ENCODE measurements at regions of chr17 and their contacts with region 1.

Region 1: GRCh38 chr17:63549946-63550807 is at the start of gene DCAF7:
- DNase-seq: peak; percentile 99 to 100
- ATAC-seq: peak; percentile 99
- H3K4me3 ChIP-seq: peak within 1 kb of the TSS; percentile 58 to 99
- H3K27ac ChIP-seq: peak within 1 kb of the TSS in 1 of 2 donors; percentile 78
- H3K4me1 ChIP-seq: peaks cover 3 to 7% of the 10 kb centered on the region in 2 donors
- H3K27me3 ChIP-seq: no peaks in the 10 kb centered on the region
- total RNA-seq, gene DCAF7: 39.3 to 52.7 TPM

Region 2: GRCh38 chr17:63600569-63601438 is 50.6 kb after region 1 on chr17 and contains the start of gene TACO1:
- intact Hi-C with region 1: loop called in 1 of 2 experiments (anchors 5 kb)
- DNase-seq: peak; percentile 87 to 92
- ATAC-seq: peak; percentile 97
- H3K4me3 ChIP-seq: peak within 1 kb of the TSS; percentile 67 to 88
- H3K27ac ChIP-seq: peak within 1 kb of the TSS; percentile 7 to 68
- H3K4me1 ChIP-seq: no peaks in the 10 kb centered on the region
- H3K27me3 ChIP-seq: no peaks in the 10 kb centered on the region
- total RNA-seq, gene TACO1: 10.8 to 11.0 TPM

Region 3: GRCh38 chr17:63881876-63882601 is 331.9 kb after region 1 on chr17 and contains the start of gene GH2:
- intact Hi-C with region 1: no loop called
- DNase-seq: no peak
- ATAC-seq: no peak
- H3K4me3 ChIP-seq: no peak within 1 kb of the TSS
- H3K27ac ChIP-seq: no peak within 1 kb of the TSS
- H3K4me1 ChIP-seq: no peaks in the 10 kb centered on the region
- H3K27me3 ChIP-seq: no peaks in the 10 kb centered on the region
- total RNA-seq, gene GH2: not detected

Measured in aorta (tissue), 5 donors.